Psoas muscle (tissue), 8 donors: ENCODE measurements at regions of chr6 and their contacts with region 1.

Region 1: DNA sequence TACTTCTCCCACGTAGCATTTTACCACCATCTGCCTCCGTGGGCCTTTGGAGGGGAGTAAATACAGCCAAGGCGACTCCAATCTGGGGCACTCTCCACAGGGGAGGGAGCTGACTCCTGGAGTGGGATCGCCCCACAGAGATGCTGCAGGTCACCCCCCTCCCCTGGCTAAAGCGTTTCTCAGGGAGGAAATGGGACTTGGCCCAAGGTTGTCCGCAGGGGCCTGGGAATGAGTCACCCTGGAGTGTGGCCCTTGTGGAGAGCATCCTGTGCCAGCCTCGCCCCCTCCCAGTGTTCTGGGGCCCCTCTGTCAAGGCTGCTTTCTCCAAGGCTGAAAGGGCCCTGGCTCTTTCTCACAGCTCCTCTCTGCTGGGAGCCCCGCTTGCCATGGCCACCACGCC is 84.5 kb upstream of the QKI start:
- DNase-seq: no peak
- ATAC-seq: no peak
- H3K4me3 ChIP-seq: no peak overlapping the region
- H3K27ac ChIP-seq: no peak overlapping the region
- H3K4me1 ChIP-seq: peaks cover 22% of the 10 kb centered on the region
- H3K27me3 ChIP-seq: no peaks in the 10 kb centered on the region
- CTCF ChIP-seq: no peak

Region 2: DNA sequence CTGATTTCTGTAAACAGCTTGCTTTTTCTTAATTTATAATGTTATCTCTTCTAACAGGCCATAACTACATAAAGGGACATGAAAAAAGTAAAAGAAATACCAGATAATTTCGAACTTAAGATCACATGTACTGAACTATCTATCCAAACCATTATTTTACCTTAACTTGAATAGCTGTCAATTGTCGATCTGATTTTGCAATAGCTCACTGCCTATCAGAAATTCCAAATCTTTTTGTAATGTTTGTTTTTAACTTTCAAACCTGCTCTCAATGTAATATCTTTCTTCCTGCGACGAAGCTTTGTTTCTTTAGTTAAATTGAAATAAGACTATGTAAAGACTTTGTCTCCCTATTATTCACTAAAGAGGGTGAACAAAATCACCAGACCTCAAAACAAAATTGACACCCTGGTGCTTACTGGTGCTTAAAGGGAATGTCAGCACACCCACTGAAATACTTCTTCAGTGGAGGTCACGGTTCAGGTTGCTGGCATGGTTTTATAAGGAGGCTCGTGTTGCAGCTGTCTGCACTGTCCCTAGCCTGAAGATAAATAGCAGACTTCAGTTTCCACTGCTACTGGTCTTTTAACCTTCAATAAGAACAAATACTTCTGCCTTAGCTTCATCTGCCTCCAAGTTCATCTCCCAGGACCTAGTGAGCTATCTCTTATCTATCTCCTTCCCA is 33.0 kb before region 1 on chr6:
- intact Hi-C with region 1: loop called in 1 of 2 experiments (anchors 5 kb)
- DNase-seq: no peak
- ATAC-seq: peak; percentile 83 to 92 (median 90)
- H3K4me3 ChIP-seq: no peak overlapping the region
- H3K27ac ChIP-seq: peak overlapping the region; percentile 54
- H3K4me1 ChIP-seq: peaks cover 50% of the 10 kb centered on the region
- H3K27me3 ChIP-seq: no peaks in the 10 kb centered on the region
- CTCF ChIP-seq: no peak